GM18951 (cell line): ENCODE measurements at regions of chr6 and their contacts with region 1.

Region 1: GRCh38 chr6:31366693-31367470 is 9.9 kb upstream of the HLA-B start:
- POLR2A ChIP-seq: no peak

Region 2: GRCh38 chr6:31139599-31139998 is 227.3 kb before region 1 on chr6:
- in situ Hi-C with region 1: loop called (anchors 10 kb)
- POLR2A ChIP-seq: no peak

Region 3: GRCh38 chr6:31407699-31408098 is 40.8 kb after region 1 on chr6:
- in situ Hi-C with region 1: no loop called
- POLR2A ChIP-seq: no peak